ENCODE measurements at regions of chr10 and their contacts with region 1.

Region 1: GRCh38 chr10:52308251-52309031 is 5.6 kb upstream of the DKK1 start:
- DNase-seq: peak; percentile 43
- H3K4me3 ChIP-seq: no peak overlapping the region
- H3K27ac ChIP-seq: no peak overlapping the region
- H3K4me1 ChIP-seq: no peaks in the 10 kb centered on the region
- CTCF ChIP-seq: peak; percentile 76

Region 2: DNA sequence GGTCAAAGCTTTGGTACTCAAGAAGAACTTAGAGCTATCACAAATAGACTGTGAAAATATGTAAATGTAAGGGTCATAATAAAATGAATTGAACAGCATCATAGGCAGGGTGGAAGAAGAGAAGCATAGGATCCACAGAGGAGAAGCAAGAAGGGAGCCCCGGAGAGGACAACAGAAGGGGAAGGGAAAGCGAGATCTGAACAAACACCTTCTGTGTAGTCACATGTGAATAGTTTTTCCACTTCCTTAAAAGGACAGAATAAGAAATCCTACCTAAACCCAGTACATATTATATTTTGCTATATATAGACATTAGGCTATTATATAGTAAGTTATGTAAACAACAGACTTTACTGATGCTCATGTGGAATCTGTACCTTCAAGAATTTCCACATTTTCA is 165.8 kb after region 1 on chr10:
- CTCF ChIA-PET with region 1: no interaction called
- POLR2A ChIA-PET with region 1: no interaction called
- intact Hi-C with region 1: no loop called
- DNase-seq: peak; percentile 10
- H3K4me3 ChIP-seq: no peak overlapping the region
- H3K27ac ChIP-seq: no peak overlapping the region
- H3K4me1 ChIP-seq: peaks cover 35% of the 10 kb centered on the region
- CTCF ChIP-seq: no peak

Region 3: DNA sequence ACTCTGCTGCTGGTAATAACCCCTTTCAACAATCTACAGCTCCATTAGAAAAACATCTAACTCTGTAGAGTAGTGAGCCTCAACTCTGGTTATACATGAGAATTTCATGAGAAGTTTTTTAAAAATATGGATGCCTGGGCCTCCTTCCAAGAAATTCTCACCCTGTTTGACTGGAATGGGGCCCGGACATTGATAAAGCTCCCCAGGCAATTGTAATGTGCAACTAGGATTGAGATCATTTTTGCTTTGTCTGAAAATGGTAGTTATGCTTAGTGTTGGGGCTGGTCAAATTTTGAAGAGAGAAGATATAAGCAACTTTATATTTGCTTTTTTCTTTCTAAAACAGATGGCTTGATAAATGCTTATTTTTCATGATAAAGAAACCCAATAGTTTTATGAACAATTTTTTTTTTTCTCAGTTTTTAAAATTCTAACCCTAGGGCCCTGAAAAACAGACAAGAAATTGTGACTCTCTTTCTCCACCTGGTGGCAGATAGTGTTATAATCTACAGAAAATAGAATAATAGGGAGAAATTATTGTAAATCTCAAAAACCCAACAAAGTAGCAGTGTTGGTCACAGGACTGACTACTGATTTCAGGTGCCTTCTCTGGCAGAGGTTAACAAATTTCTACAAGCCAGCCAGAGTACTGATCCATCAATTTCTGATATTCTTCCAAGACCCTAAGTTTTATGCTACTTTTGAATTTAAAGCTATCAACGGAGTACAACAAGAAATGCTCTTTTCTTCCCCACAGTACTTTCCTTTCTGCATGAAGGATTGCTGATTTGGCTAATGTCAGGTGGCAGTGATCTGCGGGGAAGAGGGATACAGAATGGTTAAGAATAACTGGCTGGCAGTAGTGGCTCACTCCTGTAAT is 180.4 kb after region 1 on chr10:
- CTCF ChIA-PET with region 1: no interaction called
- POLR2A ChIA-PET with region 1: no interaction called
- intact Hi-C with region 1: loop called (anchors 1 kb)
- DNase-seq: peak; percentile 36
- H3K4me3 ChIP-seq: no peak overlapping the region
- H3K27ac ChIP-seq: no peak overlapping the region
- H3K4me1 ChIP-seq: no peaks in the 10 kb centered on the region
- CTCF ChIP-seq: peak; percentile 83

Region 4: GRCh38 chr10:52566471-52567246 is 258.2 kb after region 1 on chr10:
- CTCF ChIA-PET with region 1: no interaction called
- POLR2A ChIA-PET with region 1: no interaction called
- intact Hi-C with region 1: loop called (anchors 5 kb)
- DNase-seq: peak; percentile 10
- H3K4me3 ChIP-seq: no peak overlapping the region
- H3K27ac ChIP-seq: no peak overlapping the region
- H3K4me1 ChIP-seq: no peaks in the 10 kb centered on the region
- CTCF ChIP-seq: peak; percentile 80

Measured in OCI-LY7 (cell line).